Right ventricle myocardium inferior (tissue), 1 donor: ENCODE measurements at regions of chr9 and their contacts with region 1.

Region 1: DNA sequence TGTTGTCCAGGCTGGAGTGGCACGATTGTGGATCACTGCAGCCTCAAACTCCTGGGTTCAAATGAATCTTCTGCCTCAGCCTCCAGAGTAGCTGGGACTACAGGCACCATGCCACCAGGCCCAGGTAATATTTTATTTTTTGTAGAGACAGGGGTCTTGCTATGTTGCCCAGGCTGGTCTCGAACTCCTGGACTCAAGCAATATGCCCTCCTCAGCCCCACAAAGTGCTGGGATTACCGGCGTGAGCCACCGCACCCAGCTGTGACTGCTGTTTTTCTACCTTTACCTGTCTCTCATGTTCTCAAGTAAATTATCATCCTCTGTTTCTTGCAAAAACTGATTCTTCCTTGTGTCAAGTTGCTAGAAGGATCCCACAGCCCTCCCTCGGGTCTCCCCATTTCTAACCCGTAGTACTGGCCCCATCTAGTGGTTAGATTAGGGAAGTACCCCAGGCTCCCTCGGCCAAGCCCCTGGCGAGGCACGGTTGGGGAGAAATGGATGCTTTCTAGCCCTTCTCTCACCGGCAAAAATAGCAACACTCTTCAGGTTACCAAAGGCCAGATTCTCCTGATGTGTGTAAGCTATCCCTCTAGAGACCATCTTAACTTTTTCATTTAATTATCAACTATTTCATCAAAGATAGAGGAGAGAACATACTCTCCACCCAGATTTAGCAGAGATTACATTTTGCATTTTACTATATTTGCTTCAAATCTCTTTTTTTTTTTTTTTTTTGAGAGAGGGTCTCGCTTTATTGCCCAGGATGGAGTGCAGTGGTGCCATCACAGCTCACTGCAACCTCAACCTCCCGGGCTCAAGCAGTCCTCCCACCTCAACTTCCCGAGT is 19.2 kb upstream of the TOR1B start:
- DNase-seq: peak; percentile 82
- ATAC-seq: peak; percentile 94

Region 2: GRCh38 chr9:129131300-129132145 is 652.2 kb before region 1 on chr9:
- intact Hi-C with region 1: loop called (anchors 5 kb)
- DNase-seq: peak; percentile 89
- ATAC-seq: peak; percentile 83

Region 3: DNA sequence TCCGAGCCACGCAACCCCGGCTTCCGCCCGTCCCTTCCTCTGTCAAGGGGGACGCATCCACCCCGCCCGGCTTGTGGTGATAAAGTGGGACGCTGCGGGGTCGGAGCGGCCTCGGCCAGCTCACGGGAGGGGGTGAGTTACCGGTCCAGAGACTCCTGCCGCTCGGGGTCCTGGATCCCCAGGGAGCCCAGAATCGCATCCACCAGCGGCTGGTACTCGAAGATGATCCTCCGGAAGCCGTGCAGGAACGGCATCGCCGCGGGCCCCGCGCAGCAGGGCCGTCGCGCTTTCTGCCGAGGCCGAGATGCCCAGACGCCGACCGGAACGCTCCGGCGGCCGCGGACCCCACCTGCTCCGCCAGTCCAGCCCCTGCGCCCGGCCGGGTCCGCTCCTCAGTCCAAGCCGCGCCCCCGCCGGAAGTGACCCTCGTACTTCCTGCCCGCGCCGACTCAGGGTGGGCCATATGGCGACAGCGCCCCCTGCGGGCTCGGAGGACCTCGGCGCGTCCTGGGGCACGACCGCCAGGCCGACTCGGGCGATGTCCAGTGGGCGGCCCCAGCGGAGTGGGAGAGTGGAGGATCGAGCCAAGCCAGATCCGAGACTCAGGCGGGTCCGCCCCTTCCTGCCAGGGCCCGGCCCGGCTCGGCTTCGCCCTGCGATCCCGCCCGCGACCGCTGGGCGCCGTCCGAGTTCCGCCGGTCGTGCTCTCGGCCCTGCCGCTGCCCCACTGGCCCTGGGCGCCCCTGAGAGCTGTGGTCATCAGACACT is 141.8 kb before region 1 on chr9 and contains the start of gene ASB6:
- intact Hi-C with region 1: loop called (anchors 2 kb)
- DNase-seq: peak; percentile 99
- ATAC-seq: peak; percentile 96
- total RNA-seq, gene ASB6: 9.3 TPM

Region 4: GRCh38 chr9:129726322-129727160 is 57.2 kb before region 1 on chr9:
- intact Hi-C with region 1: loop called (anchors 2 kb)
- DNase-seq: peak; percentile 85
- ATAC-seq: peak; percentile 92

Region 5: DNA sequence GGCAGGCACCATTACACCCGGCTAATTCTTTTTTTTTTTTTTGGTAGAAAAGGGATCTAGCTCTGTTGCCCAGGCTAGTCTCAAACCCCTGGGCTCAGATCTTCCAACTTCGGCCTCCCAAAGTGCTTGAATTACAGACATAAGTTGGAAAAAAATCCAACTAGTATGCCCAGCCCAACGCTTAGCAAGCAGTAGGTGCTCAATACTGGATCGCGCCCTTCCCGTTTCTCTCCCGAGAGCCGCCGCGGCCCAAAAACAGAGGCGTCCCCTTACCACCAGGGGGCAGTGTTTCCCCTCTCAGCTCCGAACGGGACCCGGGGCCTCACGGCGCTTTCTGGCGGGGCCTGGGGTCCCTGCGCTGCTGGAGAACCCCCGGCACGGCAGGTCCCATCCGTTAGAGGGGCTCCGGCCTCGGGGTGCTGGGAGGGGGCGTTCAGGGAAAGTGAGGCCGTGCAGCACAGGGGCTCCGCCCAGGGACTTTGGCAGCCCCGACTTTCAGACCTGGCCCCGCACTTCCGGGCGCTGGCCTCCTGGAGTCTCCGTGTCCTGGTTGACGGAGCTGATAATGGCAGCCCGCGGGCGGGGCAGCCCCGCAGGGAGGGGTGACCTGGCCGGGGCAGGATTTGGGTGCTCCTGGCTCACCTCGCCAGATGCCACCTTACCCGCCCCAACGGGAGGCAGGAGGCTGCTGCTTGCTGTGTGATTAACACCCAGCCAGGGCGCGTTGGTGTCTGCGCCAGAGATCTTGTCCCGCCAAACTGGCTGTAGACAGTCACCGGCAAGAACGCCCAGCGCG is 46.1 kb before region 1 on chr9:
- intact Hi-C with region 1: loop called (anchors 1 kb)
- DNase-seq: peak; percentile 92
- ATAC-seq: peak; percentile 88